Colonic mucosa (tissue), 4 donors: ENCODE measurements at regions of chr21 and their contacts with region 1.

Region 1: DNA sequence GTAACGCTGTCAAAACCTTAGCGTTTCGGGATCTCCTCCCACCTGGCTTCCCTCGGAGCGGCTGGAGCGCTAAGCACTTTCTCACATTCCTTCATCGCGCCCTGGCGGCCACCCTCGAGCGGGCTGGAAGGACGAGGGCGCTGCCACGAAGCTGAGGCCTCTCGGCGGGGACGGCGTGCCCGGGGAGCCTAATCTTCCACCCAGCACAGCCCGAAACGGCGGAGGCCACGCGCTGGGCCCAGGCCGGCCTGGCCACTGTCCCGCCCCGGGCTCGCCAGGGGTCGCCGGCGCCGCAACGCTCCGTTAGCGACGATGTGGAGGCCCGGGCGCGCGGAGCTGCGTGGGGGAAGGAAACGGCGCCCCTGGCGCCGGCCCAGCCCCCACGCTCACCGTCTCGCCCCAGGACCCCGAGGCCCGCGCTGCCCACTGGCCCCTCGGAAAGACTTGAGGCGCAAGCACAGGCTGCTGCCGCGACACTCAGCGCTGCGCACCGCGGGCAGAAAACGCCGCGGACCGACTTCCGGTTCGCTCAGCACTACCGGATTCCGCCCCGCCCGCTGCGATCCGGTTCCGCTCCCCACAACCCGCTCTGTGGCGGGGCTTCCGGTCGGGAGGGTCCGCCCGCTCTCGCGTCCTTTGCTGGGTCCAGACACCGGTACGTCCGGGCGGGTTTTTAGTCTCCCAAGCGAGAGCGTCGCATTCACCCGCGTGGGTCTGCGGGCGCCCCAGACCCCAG is at the start of gene YBEY:
- DNase-seq: peak; percentile 91
- H3K4me3 ChIP-seq: peak within 1 kb of the TSS; percentile 73
- H3K27ac ChIP-seq: peak within 1 kb of the TSS; percentile 89
- H3K4me1 ChIP-seq: peaks cover 29% of the 10 kb centered on the region
- H3K27me3 ChIP-seq: no peaks in the 10 kb centered on the region
- CTCF ChIP-seq: no peak
- total RNA-seq, gene YBEY: 8.0 to 12.4 TPM

Region 2: GRCh38 chr21:46323227-46324128 is 37.5 kb after region 1 on chr21 and contains the start of gene C21orf58:
- intact Hi-C with region 1: loop called (anchors 5 kb)
- DNase-seq: peak; percentile 96
- H3K4me3 ChIP-seq: peak within 1 kb of the TSS; percentile 74
- H3K27ac ChIP-seq: peak within 1 kb of the TSS; percentile 98
- H3K4me1 ChIP-seq: no peaks in the 10 kb centered on the region
- H3K27me3 ChIP-seq: no peaks in the 10 kb centered on the region
- CTCF ChIP-seq: no peak
- total RNA-seq, gene C21orf58: 5.5 to 25.7 TPM

Region 3: DNA sequence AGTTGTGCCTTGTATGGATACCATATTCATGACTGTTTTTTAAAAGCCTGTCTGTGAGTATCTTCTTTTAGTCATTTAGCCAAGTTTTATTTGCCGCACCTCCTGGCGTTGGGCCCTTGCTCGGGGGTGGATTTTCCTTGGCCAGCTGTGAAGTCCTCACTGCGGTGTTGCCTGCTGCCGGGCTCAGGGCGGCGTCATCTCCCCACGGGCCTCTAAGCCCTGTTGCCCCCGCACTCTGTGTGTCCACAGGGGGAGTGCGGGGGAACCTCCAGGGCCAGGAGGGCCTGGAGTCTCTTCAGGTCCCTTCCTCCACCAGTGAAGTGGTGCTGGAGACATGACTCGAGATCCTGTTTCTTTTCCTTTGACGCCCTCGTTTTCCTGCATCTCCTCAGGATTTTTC is 107.0 kb after region 1 on chr21:
- intact Hi-C with region 1: no loop called
- DNase-seq: no peak
- H3K4me3 ChIP-seq: no peak overlapping the region
- H3K27ac ChIP-seq: no peak overlapping the region
- H3K4me1 ChIP-seq: no peaks in the 10 kb centered on the region
- H3K27me3 ChIP-seq: no peaks in the 10 kb centered on the region
- CTCF ChIP-seq: no peak